SK-N-SH (cell line): ENCODE measurements at regions of chr5 and their contacts with region 1.

Region 1: GRCh38 chr5:169100421-169101075 is 200.4 kb downstream of the SLIT3 start:
- DNase-seq: no peak
- H3K4me3 ChIP-seq: no peak overlapping the region
- H3K27ac ChIP-seq: peak overlapping the region in 1 of 2 experiments; percentile 98; a peak in 2 of 4 replicates
- H3K4me1 ChIP-seq: peaks cover 0 to 51% of the 10 kb centered on the region in 2 experiments; a peak in 3 of 4 replicates
- H3K27me3 ChIP-seq: no peaks in the 10 kb centered on the region
- CTCF ChIP-seq: no peak
- EP300 ChIP-seq: no peak
- RAD21 ChIP-seq: no peak

Region 2: GRCh38 chr5:168851902-168852321 is 248.6 kb before region 1 on chr5:
- CTCF ChIA-PET with region 1: no interaction called
- POLR2A ChIA-PET with region 1: no interaction called
- DNase-seq: peak; percentile 86
- H3K4me3 ChIP-seq: peak overlapping the region; percentile 21 to 39; a peak in 3 of 4 replicates
- H3K27ac ChIP-seq: peak overlapping the region; percentile 88 to 94
- H3K4me1 ChIP-seq: peaks cover 5 to 68% of the 10 kb centered on the region in 2 experiments
- H3K27me3 ChIP-seq: no peaks in the 10 kb centered on the region
- CTCF ChIP-seq: no peak
- EP300 ChIP-seq: peak in 1 of 2 experiments; percentile 55; a peak in 2 of 4 replicates
- RAD21 ChIP-seq: peak; percentile 7; the same call in 1 of the 2 replicates

Region 3: GRCh38 chr5:169003721-169004541 is 96.6 kb before region 1 on chr5:
- CTCF ChIA-PET with region 1: interaction called, 11 read pairs
- POLR2A ChIA-PET with region 1: interaction called, 4 read pairs
- DNase-seq: peak; percentile 72
- H3K4me3 ChIP-seq: 0 out of 4 replicates have a peak overlapping the region, but pooled peaks of 1 of the 2 experiments have one; percentile 1
- H3K27ac ChIP-seq: peak overlapping the region; percentile 86 to 98
- H3K4me1 ChIP-seq: peaks cover 23 to 53% of the 10 kb centered on the region in 2 experiments
- H3K27me3 ChIP-seq: no peaks in the 10 kb centered on the region
- CTCF ChIP-seq: peak; percentile 57
- EP300 ChIP-seq: peak; percentile 10 to 75; a peak in 1 of 4 replicates
- RAD21 ChIP-seq: peak; percentile 78

Region 4: GRCh38 chr5:169114466-169115065 is 14.0 kb after region 1 on chr5:
- CTCF ChIA-PET with region 1: no interaction called
- POLR2A ChIA-PET with region 1: interaction called, 18 read pairs
- DNase-seq: no peak
- H3K4me3 ChIP-seq: no peak overlapping the region
- H3K27ac ChIP-seq: peak overlapping the region in 1 of 2 experiments; percentile 93; a peak in 2 of 4 replicates
- H3K4me1 ChIP-seq: peaks cover 0 to 39% of the 10 kb centered on the region in 2 experiments; a peak in 2 of 4 replicates
- H3K27me3 ChIP-seq: no peaks in the 10 kb centered on the region
- CTCF ChIP-seq: no peak
- EP300 ChIP-seq: no peak
- RAD21 ChIP-seq: no peak

Region 5: DNA sequence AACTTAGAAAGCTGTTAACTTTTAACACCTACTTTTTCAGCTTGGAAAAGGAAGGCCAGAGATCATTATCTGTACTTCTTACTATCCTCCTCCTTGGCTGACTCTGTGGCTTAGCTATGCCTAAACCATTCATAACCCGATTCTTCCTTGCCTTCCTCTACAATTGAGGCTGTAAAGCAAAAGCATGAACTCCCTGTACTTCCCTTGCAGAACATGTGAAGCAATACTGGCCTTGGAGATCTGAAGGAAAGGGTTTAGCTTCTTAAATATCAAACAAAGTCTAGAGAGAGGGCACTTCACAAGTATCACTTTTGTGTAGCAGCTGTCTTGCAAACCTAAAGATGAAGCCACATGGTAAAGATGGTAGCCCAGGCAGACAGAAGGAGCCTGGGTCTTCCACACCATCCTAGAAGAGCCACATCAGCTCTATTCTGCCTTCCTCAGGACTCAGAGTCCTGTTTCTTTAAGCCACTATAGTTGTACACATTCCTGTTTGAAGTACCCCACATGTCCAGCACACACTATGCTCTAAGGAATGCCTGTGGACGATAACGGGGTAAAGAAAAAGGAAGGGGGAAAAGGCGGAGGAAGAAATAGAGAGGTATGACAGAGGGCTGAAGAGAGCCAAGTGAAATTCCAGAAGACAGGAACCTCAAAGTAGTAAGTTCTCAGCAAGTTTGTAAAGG is 31.2 kb after region 1 on chr5:
- CTCF ChIA-PET with region 1: no interaction called
- POLR2A ChIA-PET with region 1: no interaction called
- DNase-seq: no peak
- H3K4me3 ChIP-seq: no peak overlapping the region
- H3K27ac ChIP-seq: no peak overlapping the region
- H3K4me1 ChIP-seq: peaks cover 0 to 8% of the 10 kb centered on the region in 2 experiments; a peak in 1 of 4 replicates
- H3K27me3 ChIP-seq: no peaks in the 10 kb centered on the region
- CTCF ChIP-seq: no peak
- EP300 ChIP-seq: no peak
- RAD21 ChIP-seq: no peak